Activated CD4-positive, alpha-beta memory T cell treated with anti-CD3 and anti-CD28 coated beads for 36 hours (primary cell): ENCODE measurements at regions of chr5 and their contacts with region 1.

Region 1: DNA sequence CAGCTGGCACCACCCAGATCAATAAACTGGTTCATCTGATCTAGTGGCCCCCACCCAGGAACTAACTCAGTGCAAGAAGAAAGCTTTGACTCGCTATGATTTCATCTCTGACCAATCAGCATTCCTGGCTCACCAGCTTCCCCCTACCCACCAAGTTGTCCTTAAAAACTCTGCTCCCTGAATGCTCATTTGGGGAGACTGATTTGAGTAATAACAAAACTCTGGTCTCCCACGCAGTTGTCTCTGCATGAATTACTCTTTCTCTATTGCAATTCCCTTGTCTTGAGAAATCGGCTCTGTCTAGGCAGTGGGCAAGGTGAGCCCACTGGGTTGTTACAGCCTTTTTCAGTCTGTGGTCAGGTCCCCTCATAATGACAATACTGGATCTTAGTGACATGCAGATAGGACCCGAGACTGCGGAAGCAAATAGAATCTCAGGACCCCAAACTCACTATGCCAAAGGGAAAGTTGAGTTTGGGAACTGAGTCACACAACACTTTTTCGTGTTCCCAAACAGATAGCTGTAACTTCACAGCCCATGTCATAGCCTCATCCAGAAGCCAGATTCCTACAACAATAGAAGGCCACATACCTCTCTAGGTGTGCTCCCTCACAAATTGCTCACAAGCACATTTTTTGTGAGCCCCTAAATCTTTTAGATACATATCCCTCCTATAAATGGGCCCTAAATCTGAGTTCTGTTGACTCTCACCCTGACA is 175.2 kb upstream of the RAI14 start:
- DNase-seq: peak; percentile 47
- H3K4me3 Mint-ChIP-seq: no peak overlapping the region
- H3K27ac Mint-ChIP-seq: no peak overlapping the region
- H3K4me1 Mint-ChIP-seq: peaks cover 16% of the 10 kb centered on the region
- H3K27me3 Mint-ChIP-seq: peaks cover 37% of the 10 kb centered on the region

Region 2: DNA sequence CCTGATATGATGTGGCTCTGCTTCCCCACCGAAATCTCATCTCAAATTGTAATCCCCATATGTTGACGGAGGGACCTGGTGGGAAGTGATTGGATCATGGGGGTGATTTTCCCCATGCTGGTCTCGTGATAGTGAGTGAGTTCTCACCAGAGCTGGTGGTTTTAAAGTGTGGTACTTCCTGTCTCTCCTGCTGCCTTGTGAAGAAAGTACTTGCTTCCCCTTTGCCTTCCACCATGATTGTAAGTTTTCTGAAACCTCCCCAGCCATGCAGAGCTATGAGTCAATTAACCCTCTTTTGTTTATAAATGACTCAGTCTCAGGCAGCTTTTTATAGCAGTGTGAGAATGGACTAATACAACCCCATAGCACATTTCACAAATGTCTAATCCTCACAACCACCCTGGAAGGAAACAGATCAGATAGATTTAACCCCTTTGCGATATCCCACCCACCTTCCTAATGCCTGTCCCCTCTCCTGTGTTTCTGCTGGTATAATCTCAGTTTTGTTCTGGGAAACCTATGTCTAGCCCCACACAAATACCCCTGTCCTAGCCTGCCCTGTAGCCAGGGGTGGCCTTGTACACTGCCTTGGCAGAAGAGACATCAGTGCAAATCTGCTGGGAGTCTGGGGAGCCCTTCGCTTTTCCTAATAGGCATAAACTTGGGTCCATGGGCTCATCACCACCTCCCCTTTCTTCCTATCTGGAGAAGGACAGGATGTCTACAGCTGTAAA is 18.2 kb after region 1 on chr5:
- CTCF ChIA-PET with region 1: interaction called, 37 read pairs
- POLR2A ChIA-PET with region 1: no interaction called
- intact Hi-C with region 1: loop called (anchors 2 kb)
- DNase-seq: peak; percentile 45
- H3K4me3 Mint-ChIP-seq: peak overlapping the region; percentile 17
- H3K27ac Mint-ChIP-seq: peak overlapping the region; percentile 49
- H3K4me1 Mint-ChIP-seq: peaks cover 13% of the 10 kb centered on the region
- H3K27me3 Mint-ChIP-seq: peaks cover 23% of the 10 kb centered on the region

Region 3: GRCh38 chr5:34608859-34609648 is 128.1 kb after region 1 on chr5:
- CTCF ChIA-PET with region 1: no interaction called
- POLR2A ChIA-PET with region 1: no interaction called
- intact Hi-C with region 1: no loop called
- DNase-seq: no peak
- H3K4me3 Mint-ChIP-seq: no peak overlapping the region
- H3K27ac Mint-ChIP-seq: no peak overlapping the region
- H3K4me1 Mint-ChIP-seq: no peaks in the 10 kb centered on the region
- H3K27me3 Mint-ChIP-seq: peaks cover 2% of the 10 kb centered on the region

Region 4: DNA sequence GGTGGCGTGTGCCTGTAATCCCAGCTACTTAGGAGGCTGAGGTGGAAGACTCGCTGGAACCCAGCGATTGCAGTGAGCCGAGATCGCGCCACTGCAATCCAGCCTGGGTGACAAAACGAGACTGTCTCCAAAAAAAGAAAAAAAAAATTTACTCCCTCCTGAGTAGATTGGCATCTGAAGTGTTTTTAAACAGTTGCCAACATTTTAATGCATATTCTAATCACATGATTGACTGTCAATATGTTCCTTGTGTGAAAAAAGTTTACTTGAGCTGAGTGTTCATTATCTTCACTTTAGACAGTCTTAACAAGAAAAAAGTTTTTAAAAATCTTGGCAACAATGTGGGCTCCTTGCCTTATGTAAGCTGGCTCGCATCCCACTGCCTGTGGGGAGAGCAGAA is 513.0 kb after region 1 on chr5:
- CTCF ChIA-PET with region 1: no interaction called
- POLR2A ChIA-PET with region 1: no interaction called
- intact Hi-C with region 1: no loop called
- DNase-seq: no peak
- H3K4me3 Mint-ChIP-seq: no peak overlapping the region
- H3K27ac Mint-ChIP-seq: no peak overlapping the region
- H3K4me1 Mint-ChIP-seq: no peaks in the 10 kb centered on the region
- H3K27me3 Mint-ChIP-seq: peaks cover 17% of the 10 kb centered on the region